ENCODE measurements at regions of chr17 and their contacts with region 1.

Region 1: GRCh38 chr17:879549-880442 is 97.6 kb downstream of the MRM3 start:
- DNase-seq: peak; percentile 77 to 88 (median 86)
- H3K4me3 ChIP-seq: no peak overlapping the region
- H3K27ac ChIP-seq: peak overlapping the region; percentile 46 to 50
- H3K4me1 ChIP-seq: peaks cover 18% of the 10 kb centered on the region
- H3K27me3 ChIP-seq: no peaks in the 10 kb centered on the region
- CTCF ChIP-seq: peak in 2 of 3 donors; percentile 57 to 69
- EP300 ChIP-seq: no peak
- POLR2A ChIP-seq: no peak

Region 2: DNA sequence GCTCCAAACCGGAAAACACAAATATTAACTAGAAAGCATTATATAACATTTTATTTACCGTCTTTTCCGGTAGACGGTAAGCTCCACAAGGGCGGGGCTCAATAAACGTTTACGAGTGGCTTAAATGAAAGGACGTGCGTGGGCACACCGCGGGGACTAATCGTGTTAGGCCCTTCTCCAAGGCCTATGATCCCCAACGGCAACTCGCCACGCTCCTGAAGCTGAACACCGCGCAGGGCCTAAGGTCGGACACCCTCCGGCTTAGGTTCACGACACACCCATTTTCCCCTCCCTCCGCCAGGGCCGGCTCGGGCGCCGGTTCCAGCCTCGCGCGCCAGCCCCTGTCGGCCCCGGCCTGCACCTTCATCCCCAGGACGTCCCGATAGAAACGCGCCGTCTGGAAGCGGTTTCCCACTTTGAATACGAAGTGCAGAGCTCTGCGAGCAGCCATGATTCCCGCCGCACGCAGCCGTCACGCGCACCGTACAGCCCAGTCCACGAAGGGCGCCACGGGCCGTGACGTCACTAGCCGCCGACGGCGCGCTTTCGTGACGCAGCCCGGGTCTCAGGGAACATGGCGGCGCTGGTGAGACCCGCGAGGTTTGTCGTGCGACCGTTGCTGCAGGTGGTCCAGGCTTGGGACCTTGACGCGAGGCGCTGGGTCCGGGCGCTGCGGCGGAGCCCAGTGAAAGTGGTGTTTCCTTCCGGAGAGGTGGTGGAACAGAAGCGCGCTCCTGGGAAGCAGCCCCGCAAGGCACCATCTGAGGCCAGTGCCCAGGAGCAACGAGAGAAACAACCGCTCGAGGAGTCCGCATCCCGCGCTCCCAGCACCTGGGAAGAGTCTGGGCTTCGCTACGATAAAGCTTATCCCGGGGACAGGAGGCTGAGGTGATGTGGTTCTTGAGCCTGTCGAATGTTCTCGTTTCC is 97.7 kb before region 1 on chr17 and contains the starts of genes GLOD4 and MRM3:
- intact Hi-C with region 1: no loop called
- DNase-seq: peak; percentile 88 to 97 (median 94)
- H3K4me3 ChIP-seq: peak within 1 kb of the TSS; percentile 78
- H3K27ac ChIP-seq: peak within 1 kb of the TSS; percentile 46 to 64
- H3K4me1 ChIP-seq: peaks cover 2% of the 10 kb centered on the region
- H3K27me3 ChIP-seq: no peaks in the 10 kb centered on the region
- CTCF ChIP-seq: peak in 2 of 3 donors; percentile 49 to 68
- EP300 ChIP-seq: no peak
- POLR2A ChIP-seq: peak; percentile 82
- total RNA-seq, gene GLOD4: 22.1 to 66.7 (median 46.0) TPM
- total RNA-seq, gene MRM3: 10.1 to 16.7 (median 14.0) TPM

Region 3: GRCh38 chr17:915538-916201 is 35.9 kb after region 1 on chr17:
- intact Hi-C with region 1: loop called in 1 of 4 experiments (anchors 2 kb)
- DNase-seq: peak in 1 of 5 donors; percentile 34
- H3K4me3 ChIP-seq: no peak overlapping the region
- H3K27ac ChIP-seq: no peak overlapping the region
- H3K4me1 ChIP-seq: no peaks in the 10 kb centered on the region
- H3K27me3 ChIP-seq: no peaks in the 10 kb centered on the region
- CTCF ChIP-seq: no peak
- EP300 ChIP-seq: no peak
- POLR2A ChIP-seq: no peak

Region 4: DNA sequence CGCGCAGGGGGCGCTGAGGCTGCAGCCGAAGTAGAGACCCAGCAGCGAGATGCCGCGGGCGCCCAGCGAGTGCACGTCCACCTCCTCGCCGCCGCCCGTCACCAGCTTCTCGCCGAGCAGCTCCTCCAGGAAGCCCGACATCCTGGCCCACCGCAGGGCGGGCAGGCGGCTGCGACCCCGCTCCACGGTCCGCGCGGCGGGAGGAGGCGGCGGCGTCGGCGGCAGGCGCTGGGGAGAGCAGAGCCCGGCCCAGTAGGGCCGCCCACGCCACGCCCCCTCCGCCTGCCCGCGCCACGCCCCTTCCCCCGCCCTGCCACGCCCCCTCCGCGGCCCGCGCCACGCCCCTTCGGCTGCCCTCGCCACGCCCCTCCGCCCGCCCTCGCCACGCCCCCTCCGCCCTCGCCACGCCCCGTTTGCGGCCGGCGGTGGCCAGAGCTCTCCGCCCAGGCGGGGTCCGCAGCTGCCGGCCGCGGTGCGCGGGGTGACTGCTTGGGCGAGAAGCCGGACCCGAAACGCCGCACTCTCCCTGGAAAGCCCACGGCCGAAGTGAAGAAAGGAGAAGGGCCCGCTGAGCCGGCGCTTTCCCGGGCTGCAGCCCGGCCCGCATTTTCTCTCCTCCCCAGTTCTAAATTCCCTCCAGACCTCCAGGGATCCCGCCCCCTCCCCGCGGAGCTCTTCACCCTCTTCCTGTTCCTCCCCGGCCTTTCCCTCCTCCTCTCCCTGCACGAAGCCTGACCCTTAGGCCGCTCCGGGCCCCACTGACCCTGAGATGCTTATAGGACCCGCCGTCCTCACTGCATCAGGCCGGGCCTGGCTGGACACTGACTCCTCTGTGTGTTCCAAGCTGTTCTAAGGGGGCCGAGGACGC is 100.0 kb after region 1 on chr17 and contains the start of gene NXN:
- intact Hi-C with region 1: loop called in 2 of 4 experiments (anchors 2 to 5 kb)
- DNase-seq: peak; percentile 84 to 94 (median 93)
- H3K4me3 ChIP-seq: peak within 1 kb of the TSS; percentile 79
- H3K27ac ChIP-seq: peak within 1 kb of the TSS; percentile 52 to 54
- H3K4me1 ChIP-seq: peaks cover 1% of the 10 kb centered on the region
- H3K27me3 ChIP-seq: no peaks in the 10 kb centered on the region
- CTCF ChIP-seq: peak in 2 of 3 donors; percentile 48 to 50
- EP300 ChIP-seq: no peak
- POLR2A ChIP-seq: no peak
- total RNA-seq, gene NXN: 5.5 to 34.8 (median 28.4) TPM

Region 5: GRCh38 chr17:1055751-1056645 is 176.2 kb after region 1 on chr17:
- intact Hi-C with region 1: loop called in 1 of 4 experiments (anchors 10 kb)
- DNase-seq: peak; percentile 57 to 77 (median 73)
- H3K4me3 ChIP-seq: no peak overlapping the region
- H3K27ac ChIP-seq: peak overlapping the region in 1 of 2 donors; percentile 3
- H3K4me1 ChIP-seq: no peaks in the 10 kb centered on the region
- H3K27me3 ChIP-seq: no peaks in the 10 kb centered on the region
- CTCF ChIP-seq: peak; percentile 67 to 79 (median 76)
- EP300 ChIP-seq: no peak
- POLR2A ChIP-seq: no peak

Region 6: DNA sequence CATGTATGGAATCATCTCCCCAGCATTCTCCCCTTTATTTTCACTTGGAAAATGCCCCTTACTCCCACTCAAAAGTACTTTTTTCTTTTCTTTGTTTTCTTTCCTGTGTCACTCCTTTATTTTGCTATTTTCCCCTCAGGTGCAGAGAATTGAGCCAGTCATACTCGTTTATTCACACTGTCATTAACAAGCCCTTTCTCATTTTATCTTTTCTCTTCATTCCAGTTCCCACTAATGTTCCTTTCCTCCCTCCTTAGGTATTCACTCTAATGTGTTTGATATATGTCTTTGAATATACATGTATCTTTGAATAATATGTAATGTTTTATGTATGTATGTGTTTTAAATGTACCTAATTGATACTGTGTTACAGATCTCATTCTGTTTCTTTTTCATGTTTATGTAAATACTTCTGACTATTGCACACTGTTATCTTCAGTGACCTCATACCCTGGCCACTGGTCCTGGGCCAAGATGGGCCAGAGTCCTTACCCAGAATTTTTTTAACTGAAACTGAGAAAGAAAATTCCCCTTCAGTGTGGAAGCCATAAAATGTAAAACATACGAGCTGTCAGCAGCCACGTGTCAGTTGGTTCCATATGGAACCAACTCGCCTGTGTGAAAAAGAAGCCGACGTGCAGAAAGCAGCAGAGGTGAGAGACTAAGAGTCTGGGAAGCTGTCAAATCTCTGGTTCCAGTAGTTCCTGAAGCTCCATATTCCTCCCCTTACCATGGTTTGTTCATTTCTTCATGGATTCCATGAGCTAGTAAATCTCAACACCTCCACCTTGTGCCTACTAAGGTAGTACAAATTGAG is 1429.8 kb after region 1 on chr17:
- intact Hi-C with region 1: loop called in 1 of 4 experiments (anchors 5 kb)
- DNase-seq: peak in 1 of 5 donors; percentile 55
- H3K4me3 ChIP-seq: no peak overlapping the region
- H3K27ac ChIP-seq: no peak overlapping the region
- H3K4me1 ChIP-seq: no peaks in the 10 kb centered on the region
- H3K27me3 ChIP-seq: no peaks in the 10 kb centered on the region
- CTCF ChIP-seq: no peak
- EP300 ChIP-seq: no peak
- POLR2A ChIP-seq: no peak

Measured in ovary (tissue), 10 donors.